ENCODE measurements at regions of chr2 and their contacts with region 1.

Region 1: GRCh38 chr2:99079226-99079625 is 62.3 kb upstream of the C2orf15 start:
- DNase-seq: no peak
- ATAC-seq: no peak
- H3K4me3 Mint-ChIP-seq: no peak overlapping the region
- H3K27ac Mint-ChIP-seq: no peak overlapping the region
- H3K4me1 Mint-ChIP-seq: peaks cover 11% of the 10 kb centered on the region
- H3K27me3 Mint-ChIP-seq: peaks cover 15% of the 10 kb centered on the region
- CTCF ChIP-seq: no peak

Region 2: GRCh38 chr2:98839292-98839691 is 239.9 kb before region 1 on chr2:
- CTCF ChIA-PET with region 1: no interaction called
- POLR2A ChIA-PET with region 1: no interaction called
- DNase-seq: no peak
- ATAC-seq: no peak
- H3K4me3 Mint-ChIP-seq: no peak overlapping the region
- H3K27ac Mint-ChIP-seq: no peak overlapping the region
- H3K4me1 Mint-ChIP-seq: no peaks in the 10 kb centered on the region
- H3K27me3 Mint-ChIP-seq: no peaks in the 10 kb centered on the region
- CTCF ChIP-seq: no peak

Region 3: GRCh38 chr2:98959810-98960507 is 119.3 kb before region 1 on chr2:
- CTCF ChIA-PET with region 1: no interaction called
- POLR2A ChIA-PET with region 1: no interaction called
- DNase-seq: no peak
- ATAC-seq: no peak
- H3K4me3 Mint-ChIP-seq: no peak overlapping the region
- H3K27ac Mint-ChIP-seq: no peak overlapping the region
- H3K4me1 Mint-ChIP-seq: no peaks in the 10 kb centered on the region
- H3K27me3 Mint-ChIP-seq: no peaks in the 10 kb centered on the region; the same call in 1 of the 2 replicates
- CTCF ChIP-seq: no peak

Region 4: DNA sequence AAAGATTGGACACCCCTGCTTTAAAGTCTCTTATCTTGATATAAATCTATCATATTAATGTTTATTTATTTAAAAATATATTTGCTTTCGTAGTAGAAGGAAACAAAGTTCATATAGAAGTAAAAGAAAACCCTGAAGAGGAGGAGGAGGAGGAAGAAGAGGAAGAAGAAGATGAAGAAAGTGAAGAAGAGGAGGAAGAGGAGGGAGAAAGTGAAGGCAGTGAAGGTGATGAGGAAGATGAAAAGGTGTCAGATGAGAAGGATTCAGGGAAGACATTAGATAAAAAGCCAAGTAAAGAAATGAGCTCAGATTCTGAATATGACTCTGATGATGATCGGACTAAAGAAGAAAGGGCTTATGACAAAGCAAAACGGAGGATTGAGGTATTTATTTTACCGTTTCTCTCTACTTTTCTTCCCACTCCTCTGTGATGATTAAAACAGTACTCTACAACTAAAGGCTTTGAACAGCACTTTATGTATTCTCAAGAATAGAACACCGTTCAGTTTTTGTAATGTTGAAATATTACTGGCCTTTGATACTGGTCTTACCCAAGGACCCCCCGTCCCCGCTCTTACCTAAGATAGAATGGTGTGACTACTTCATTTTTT is 297.1 kb after region 1 on chr2:
- CTCF ChIA-PET with region 1: no interaction called
- POLR2A ChIA-PET with region 1: interaction called, 10 read pairs
- DNase-seq: no peak
- ATAC-seq: no peak
- H3K4me3 Mint-ChIP-seq: no peak overlapping the region
- H3K27ac Mint-ChIP-seq: no peak overlapping the region; the same call in 1 of the 2 replicates
- H3K4me1 Mint-ChIP-seq: peaks cover 10% of the 10 kb centered on the region
- H3K27me3 Mint-ChIP-seq: no peaks in the 10 kb centered on the region
- CTCF ChIP-seq: no peak

Measured in WTC11 (cell line).